PC-9 (cell line): ENCODE measurements at regions of chr11 and their contacts with region 1.

Region 1: DNA sequence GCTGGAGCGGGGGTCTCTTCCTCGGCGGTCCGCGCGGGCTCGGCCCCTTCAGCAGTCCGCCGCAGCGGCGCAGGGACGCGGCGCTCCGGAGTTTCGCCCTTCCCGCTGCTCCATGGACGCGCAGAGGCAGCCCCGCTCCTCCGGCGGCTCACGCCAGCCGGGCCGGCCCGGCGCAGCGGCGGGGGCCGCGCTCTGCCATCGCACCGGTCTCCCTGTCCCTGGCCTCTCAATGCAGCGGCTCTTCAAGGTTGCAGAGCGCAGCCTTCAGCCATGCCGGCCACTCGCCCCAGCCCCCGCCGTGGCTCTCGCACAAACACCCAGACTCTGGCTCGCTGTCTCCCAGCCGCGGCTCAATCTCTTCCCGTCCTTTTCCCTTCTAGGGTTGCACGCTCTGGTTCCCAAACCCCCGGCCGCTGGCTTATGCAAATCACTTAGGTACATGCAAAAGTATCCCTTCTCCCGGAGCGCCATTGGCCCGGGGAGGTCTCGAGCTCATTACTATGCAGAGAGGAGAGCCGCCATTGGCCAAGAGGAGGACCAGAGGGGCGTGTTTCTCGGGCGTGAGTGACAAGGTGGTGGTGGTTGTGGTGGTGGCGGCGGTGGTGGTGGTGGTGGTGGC is at the start of gene LGR4:
- DNase-seq: peak; percentile 94 to 95
- H3K4me3 ChIP-seq: peak within 1 kb of the TSS; percentile 92
- H3K27ac ChIP-seq: peak within 1 kb of the TSS; percentile 94
- H3K4me1 ChIP-seq: peaks cover 37% of the 10 kb centered on the region
- H3K27me3 ChIP-seq: no peaks in the 10 kb centered on the region
- CTCF ChIP-seq: no peak
- total RNA-seq, gene LGR4: 33.4 and 37.4 TPM in 2 replicates

Region 2: GRCh38 chr11:27231530-27231929 is 241.0 kb before region 1 on chr11:
- CTCF ChIA-PET with region 1: no interaction called
- POLR2A ChIA-PET with region 1: interaction called, 22 read pairs
- intact Hi-C with region 1: no loop called
- DNase-seq: no peak
- H3K4me3 ChIP-seq: no peak overlapping the region
- H3K27ac ChIP-seq: no peak overlapping the region
- H3K4me1 ChIP-seq: no peaks in the 10 kb centered on the region
- H3K27me3 ChIP-seq: no peaks in the 10 kb centered on the region
- CTCF ChIP-seq: no peak

Region 3: GRCh38 chr11:27383645-27384044 is 88.9 kb before region 1 on chr11:
- CTCF ChIA-PET with region 1: no interaction called
- POLR2A ChIA-PET with region 1: interaction called, 16 read pairs
- intact Hi-C with region 1: no loop called
- DNase-seq: no peak
- H3K4me3 ChIP-seq: no peak overlapping the region
- H3K27ac ChIP-seq: no peak overlapping the region
- H3K4me1 ChIP-seq: no peaks in the 10 kb centered on the region
- H3K27me3 ChIP-seq: no peaks in the 10 kb centered on the region
- CTCF ChIP-seq: no peak

Region 4: GRCh38 chr11:27443746-27444507 is 28.6 kb before region 1 on chr11:
- CTCF ChIA-PET with region 1: interaction called, 4 read pairs
- POLR2A ChIA-PET with region 1: interaction called, 9 read pairs
- intact Hi-C with region 1: loop called (anchors 1 kb)
- DNase-seq: no peak
- H3K4me3 ChIP-seq: no peak overlapping the region
- H3K27ac ChIP-seq: no peak overlapping the region
- H3K4me1 ChIP-seq: peaks cover 36% of the 10 kb centered on the region
- H3K27me3 ChIP-seq: no peaks in the 10 kb centered on the region
- CTCF ChIP-seq: no peak

Region 5: GRCh38 chr11:28026634-28027290 is 554.3 kb after region 1 on chr11:
- CTCF ChIA-PET with region 1: no interaction called
- POLR2A ChIA-PET with region 1: no interaction called
- intact Hi-C with region 1: no loop called
- DNase-seq: no peak
- H3K4me3 ChIP-seq: no peak overlapping the region
- H3K27ac ChIP-seq: no peak overlapping the region
- H3K4me1 ChIP-seq: no peaks in the 10 kb centered on the region
- H3K27me3 ChIP-seq: no peaks in the 10 kb centered on the region
- CTCF ChIP-seq: no peak

Region 6: GRCh38 chr11:28649922-28650321 is 1177.4 kb after region 1 on chr11:
- CTCF ChIA-PET with region 1: no interaction called
- POLR2A ChIA-PET with region 1: interaction called, 15 read pairs
- intact Hi-C with region 1: no loop called
- DNase-seq: no peak
- H3K4me3 ChIP-seq: no peak overlapping the region
- H3K27ac ChIP-seq: no peak overlapping the region
- H3K4me1 ChIP-seq: no peaks in the 10 kb centered on the region
- H3K27me3 ChIP-seq: no peaks in the 10 kb centered on the region
- CTCF ChIP-seq: no peak